ENCODE measurements at regions of chr3 and their contacts with region 1.

Region 1: DNA sequence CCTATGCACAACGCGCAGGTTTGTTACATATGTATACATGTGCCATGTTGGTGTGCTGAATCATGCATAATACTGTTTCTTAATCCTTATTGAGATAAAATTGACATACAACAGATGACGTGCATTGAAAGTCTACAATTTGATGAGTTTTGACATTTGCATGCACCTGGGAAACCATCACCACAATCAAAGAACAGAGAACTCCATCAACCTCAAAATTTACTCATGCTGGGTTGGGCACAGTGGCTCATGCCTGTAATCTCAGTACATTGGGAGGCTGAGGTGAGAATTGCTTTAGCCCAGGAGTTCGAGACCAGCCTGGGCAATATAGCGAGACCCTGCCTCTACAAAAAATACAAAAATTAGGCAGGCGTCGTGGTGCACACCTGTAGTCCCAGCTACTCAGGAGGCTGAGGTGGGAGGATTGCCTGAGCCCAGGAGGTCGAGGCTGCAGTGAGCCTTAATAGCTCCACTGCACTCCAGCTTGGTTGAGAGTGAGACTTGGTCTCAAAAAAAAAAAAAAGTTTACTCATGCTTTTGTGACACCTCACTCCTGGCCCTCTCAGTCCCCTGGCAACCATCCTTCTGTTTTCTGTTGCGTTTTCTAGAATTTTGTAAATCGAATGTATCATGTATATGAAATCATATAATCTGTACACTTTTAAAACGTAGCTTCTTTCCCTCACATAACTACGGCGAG is 56.6 kb downstream of the BHLHE40 start:
- DNase-seq: no peak
- ATAC-seq: no peak
- H3K4me3 ChIP-seq: no peak overlapping the region
- H3K4me3 Mint-ChIP-seq: no peak overlapping the region
- H3K27ac ChIP-seq: no peak overlapping the region
- H3K27ac Mint-ChIP-seq: peak overlapping the region in 1 of 2 donors; percentile 91
- H3K4me1 ChIP-seq: peaks cover 36% of the 10 kb centered on the region
- H3K4me1 Mint-ChIP-seq: peaks cover 45 to 50% of the 10 kb centered on the region in 2 donors
- H3K27me3 ChIP-seq: no peaks in the 10 kb centered on the region
- H3K27me3 Mint-ChIP-seq: no peaks in the 10 kb centered on the region
- CTCF ChIP-seq: no peak

Region 2: DNA sequence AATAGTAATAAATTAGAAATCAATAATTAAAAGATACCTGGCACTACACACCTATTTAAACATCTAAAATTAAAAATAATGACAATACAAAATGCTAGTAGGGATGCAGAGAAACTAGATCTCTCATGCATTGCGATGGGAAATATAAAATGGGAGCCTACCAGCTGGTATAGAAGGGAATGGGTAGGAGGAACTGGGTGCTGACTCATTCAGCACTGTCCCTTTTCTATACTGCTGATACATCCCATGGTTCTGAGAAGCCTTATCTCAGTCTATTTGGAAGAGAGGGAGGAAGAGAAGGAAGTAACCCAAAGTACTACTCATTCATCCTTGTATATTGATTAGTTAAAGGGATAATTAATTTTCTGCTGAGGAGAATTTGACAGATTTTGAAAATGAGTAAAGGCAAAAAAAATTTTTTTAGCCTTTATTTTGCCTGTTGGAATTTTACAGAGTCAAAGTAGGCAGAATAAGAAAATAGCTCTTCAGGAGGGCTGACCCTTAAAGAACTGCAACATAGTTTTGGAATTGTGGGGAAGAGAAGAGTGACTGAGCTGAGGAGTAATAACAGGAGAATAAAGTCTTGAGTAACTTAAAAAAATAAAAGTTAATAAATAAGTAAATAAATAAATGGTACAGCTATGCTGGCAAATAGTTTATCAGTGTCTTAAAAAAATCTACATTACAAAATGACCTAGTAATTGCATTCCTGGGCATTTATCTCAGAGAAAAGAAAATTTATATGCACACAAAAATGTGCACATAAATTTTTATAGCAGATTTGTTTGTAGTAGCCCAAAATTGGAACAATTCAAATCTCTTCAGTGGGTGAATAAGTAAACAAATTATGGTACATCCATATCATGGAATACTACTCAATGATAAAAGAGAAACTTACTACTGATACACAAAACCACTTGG is 71.9 kb before region 1 on chr3:
- intact Hi-C with region 1: no loop called
- DNase-seq: no peak
- ATAC-seq: no peak
- H3K4me3 ChIP-seq: no peak overlapping the region
- H3K4me3 Mint-ChIP-seq: no peak overlapping the region
- H3K27ac ChIP-seq: no peak overlapping the region
- H3K27ac Mint-ChIP-seq: peak overlapping the region in 1 of 2 donors; percentile 64
- H3K4me1 ChIP-seq: peaks cover 11% of the 10 kb centered on the region
- H3K4me1 Mint-ChIP-seq: peaks cover 28 to 33% of the 10 kb centered on the region in 2 donors
- H3K27me3 ChIP-seq: no peaks in the 10 kb centered on the region
- H3K27me3 Mint-ChIP-seq: no peaks in the 10 kb centered on the region
- CTCF ChIP-seq: no peak

Region 3: GRCh38 chr3:5057857-5058324 is 22.0 kb after region 1 on chr3:
- intact Hi-C with region 1: loop called (anchors 2 kb)
- DNase-seq: peak; percentile 58 to 89
- ATAC-seq: peak; percentile 95 to 98 (median 96)
- H3K4me3 ChIP-seq: no peak overlapping the region
- H3K4me3 Mint-ChIP-seq: no peak overlapping the region
- H3K27ac ChIP-seq: no peak overlapping the region
- H3K27ac Mint-ChIP-seq: no peak overlapping the region
- H3K4me1 ChIP-seq: peaks cover 32% of the 10 kb centered on the region
- H3K4me1 Mint-ChIP-seq: peaks cover 17 to 31% of the 10 kb centered on the region in 2 donors
- H3K27me3 ChIP-seq: no peaks in the 10 kb centered on the region
- H3K27me3 Mint-ChIP-seq: peaks cover 4 to 7% of the 10 kb centered on the region in 2 donors
- CTCF ChIP-seq: peak; percentile 79